GM12878 (cell line): ENCODE measurements at regions of chr18 and their contacts with region 1.

Region 1: DNA sequence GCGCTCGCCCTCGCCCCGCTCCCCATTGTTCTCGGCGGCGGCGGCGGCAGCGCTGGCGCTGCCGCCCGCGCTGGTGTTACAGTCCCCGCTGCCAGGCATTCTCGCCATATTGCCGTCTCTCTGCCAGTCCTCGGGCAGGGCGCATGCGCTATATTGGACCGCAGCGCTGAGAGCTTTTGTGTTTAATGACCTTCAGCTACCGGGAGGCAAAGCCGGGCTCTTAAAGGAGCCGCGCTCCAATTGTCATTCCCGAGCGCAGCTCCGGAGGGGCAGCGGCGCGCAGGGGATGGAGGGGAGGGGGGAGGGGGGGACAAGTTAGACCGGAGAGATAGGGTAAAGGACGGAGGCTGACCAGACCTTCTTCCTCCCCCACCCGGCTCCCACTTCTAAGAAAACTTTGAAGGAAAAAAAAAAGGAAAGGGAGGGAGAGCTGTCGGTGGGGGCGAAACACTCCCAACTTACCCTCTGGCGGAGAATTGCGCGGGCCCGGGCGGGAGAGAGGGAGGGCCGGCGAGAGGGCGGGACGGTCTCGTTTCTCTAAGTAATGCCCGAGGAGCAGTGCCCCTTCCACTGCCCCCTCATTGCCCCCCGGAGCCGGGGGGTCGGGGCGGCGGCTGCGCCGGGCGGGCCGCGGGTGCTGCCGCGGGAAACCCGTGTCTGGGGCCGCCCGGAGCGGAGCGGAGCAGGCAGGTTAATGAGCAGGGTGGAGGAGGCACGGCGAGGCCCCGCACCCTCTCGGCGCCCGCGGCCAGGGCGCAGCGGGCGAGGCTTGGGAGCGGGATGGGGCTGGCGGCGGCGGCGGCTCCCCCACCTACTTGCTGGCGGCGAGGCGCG is at the start of gene KCTD1:
- DNase-seq: no peak
- ATAC-seq: peak; percentile 70
- H3K4me3 ChIP-seq: peak within 1 kb of the TSS; percentile 70
- H3K27ac ChIP-seq: peak within 1 kb of the TSS; percentile 67
- H3K4me1 ChIP-seq: peaks cover 31% of the 10 kb centered on the region
- H3K27me3 ChIP-seq: peaks cover 4 to 8% of the 10 kb centered on the region in 2 experiments
- CTCF ChIP-seq: no peak
- EP300 ChIP-seq: no peak
- POLR2A ChIP-seq: peak; percentile 46; the same call in 1 of the 2 replicates
- RAD21 ChIP-seq: no peak
- polyA plus RNA-seq, gene KCTD1: 1.5 to 1.8 TPM

Region 2: GRCh38 chr18:26480897-26481895 is 67.5 kb before region 1 on chr18:
- CTCF ChIA-PET with region 1: interaction called, 3 read pairs
- POLR2A ChIA-PET with region 1: no interaction called
- RAD21 ChIA-PET with region 1: no interaction called
- SMC1A ChIA-PET with region 1: interaction called, 3 read pairs
- in situ Hi-C with region 1: no loop called
- intact Hi-C with region 1: loop called (anchors 5 kb)
- DNase-seq: no peak
- ATAC-seq: peak; percentile 55
- H3K4me3 ChIP-seq: no peak overlapping the region
- H3K27ac ChIP-seq: no peak overlapping the region
- H3K4me1 ChIP-seq: no peaks in the 10 kb centered on the region
- H3K27me3 ChIP-seq: no peaks in the 10 kb centered on the region
- CTCF ChIP-seq: no peak
- EP300 ChIP-seq: no peak
- POLR2A ChIP-seq: no peak
- RAD21 ChIP-seq: no peak

Region 3: DNA sequence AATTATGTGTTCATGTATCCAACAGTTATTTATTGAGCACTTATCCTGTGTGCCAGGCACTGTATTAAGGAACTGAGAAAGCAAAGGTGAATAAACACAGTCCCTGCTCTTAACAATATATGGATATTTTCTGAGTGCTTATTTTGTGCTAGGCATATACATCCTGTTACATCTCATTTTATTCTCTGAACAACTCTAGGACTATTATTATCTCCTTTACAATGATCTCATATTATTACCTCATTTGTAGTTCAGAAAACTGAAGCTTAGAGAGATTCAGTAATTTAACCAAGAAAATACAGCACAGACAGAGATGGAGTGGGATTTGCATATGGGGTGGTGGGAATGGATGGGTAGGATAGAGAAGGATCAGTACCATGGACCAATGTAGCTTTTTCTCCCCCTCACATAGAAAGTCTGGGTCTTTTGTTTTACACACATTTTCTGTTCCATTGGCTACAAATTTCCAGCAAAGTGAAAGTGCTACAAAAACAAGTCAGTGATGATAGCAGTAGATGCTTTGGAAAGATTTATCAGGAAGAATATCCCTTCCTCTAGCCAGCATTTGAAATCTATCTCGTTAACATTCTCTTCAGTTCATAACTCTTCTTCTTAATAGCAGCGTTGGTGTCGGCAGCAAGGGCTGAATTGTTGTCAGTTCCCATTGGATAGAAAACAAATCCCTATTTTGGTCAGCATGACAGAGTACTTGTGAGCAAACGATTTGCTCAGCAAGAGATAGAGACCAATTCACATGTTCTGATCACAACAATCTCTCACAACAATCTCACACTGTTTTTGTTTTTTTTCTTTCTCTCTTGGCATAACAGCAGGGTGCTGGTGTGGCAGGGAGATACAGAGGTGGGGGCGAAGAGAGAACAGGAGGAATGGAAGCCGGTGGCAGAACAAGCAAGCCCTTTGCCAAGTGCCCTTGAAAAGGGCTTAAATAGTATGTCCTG is 101.9 kb after region 1 on chr18:
- CTCF ChIA-PET with region 1: interaction called, 4 read pairs
- POLR2A ChIA-PET with region 1: no interaction called
- RAD21 ChIA-PET with region 1: interaction called, 4 read pairs
- SMC1A ChIA-PET with region 1: interaction called, 3 read pairs
- in situ Hi-C with region 1: no loop called
- intact Hi-C with region 1: loop called (anchors 5 kb)
- DNase-seq: no peak
- ATAC-seq: no peak
- H3K4me3 ChIP-seq: no peak overlapping the region
- H3K27ac ChIP-seq: no peak overlapping the region
- H3K4me1 ChIP-seq: peaks cover 8% of the 10 kb centered on the region
- H3K27me3 ChIP-seq: peaks cover 5 to 22% of the 10 kb centered on the region in 2 experiments
- CTCF ChIP-seq: no peak
- EP300 ChIP-seq: no peak
- POLR2A ChIP-seq: no peak
- RAD21 ChIP-seq: no peak

Region 4: GRCh38 chr18:26978812-26979341 is 430.2 kb after region 1 on chr18:
- CTCF ChIA-PET with region 1: no interaction called
- POLR2A ChIA-PET with region 1: no interaction called
- RAD21 ChIA-PET with region 1: no interaction called
- SMC1A ChIA-PET with region 1: no interaction called
- in situ Hi-C with region 1: no loop called
- intact Hi-C with region 1: loop called (anchors 10 kb)
- DNase-seq: peak; percentile 76
- ATAC-seq: peak; percentile 99
- H3K4me3 ChIP-seq: peak overlapping the region; percentile 82; the same call in 1 of the 2 replicates
- H3K27ac ChIP-seq: peak overlapping the region; percentile 81
- H3K4me1 ChIP-seq: peaks cover 8% of the 10 kb centered on the region; the same call in 1 of the 2 replicates
- H3K27me3 ChIP-seq: no peaks in the 10 kb centered on the region
- CTCF ChIP-seq: no peak
- EP300 ChIP-seq: peak in 1 of 2 experiments; percentile 55; a peak in 1 of 4 replicates
- POLR2A ChIP-seq: peak; percentile 43
- RAD21 ChIP-seq: no peak